Right cardiac atrium (tissue), 5 donors: ENCODE measurements at regions of chr3 and their contacts with region 1.

Region 1: DNA sequence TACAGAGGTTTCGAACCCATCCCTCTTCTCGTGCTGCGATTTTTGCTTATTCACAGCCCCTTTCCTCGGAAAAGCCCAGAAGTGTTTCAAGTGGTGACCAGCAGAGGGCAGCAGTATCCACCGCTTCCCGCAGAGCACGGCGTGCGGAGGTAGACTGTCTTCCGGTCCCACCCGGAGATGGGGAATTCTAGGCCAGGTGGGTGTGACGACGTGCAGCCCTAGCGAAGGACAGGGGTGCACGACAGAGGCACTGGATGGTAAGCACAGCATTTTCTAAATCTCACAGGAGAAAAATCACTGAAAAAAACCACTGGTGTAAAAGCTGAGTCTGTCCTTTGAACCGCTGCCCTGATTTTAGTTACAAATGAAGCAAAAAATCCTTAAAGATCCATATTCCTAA is 7.4 kb upstream of the PSMD6 start:
- DNase-seq: peak; percentile 71 to 87 (median 83)
- ATAC-seq: peak; percentile 90 to 92
- H3K4me3 ChIP-seq: peak overlapping the region; percentile 34
- H3K27ac ChIP-seq: no peak overlapping the region
- H3K4me1 ChIP-seq: no peaks in the 10 kb centered on the region
- H3K27me3 ChIP-seq: peaks cover 2% of the 10 kb centered on the region

Region 2: DNA sequence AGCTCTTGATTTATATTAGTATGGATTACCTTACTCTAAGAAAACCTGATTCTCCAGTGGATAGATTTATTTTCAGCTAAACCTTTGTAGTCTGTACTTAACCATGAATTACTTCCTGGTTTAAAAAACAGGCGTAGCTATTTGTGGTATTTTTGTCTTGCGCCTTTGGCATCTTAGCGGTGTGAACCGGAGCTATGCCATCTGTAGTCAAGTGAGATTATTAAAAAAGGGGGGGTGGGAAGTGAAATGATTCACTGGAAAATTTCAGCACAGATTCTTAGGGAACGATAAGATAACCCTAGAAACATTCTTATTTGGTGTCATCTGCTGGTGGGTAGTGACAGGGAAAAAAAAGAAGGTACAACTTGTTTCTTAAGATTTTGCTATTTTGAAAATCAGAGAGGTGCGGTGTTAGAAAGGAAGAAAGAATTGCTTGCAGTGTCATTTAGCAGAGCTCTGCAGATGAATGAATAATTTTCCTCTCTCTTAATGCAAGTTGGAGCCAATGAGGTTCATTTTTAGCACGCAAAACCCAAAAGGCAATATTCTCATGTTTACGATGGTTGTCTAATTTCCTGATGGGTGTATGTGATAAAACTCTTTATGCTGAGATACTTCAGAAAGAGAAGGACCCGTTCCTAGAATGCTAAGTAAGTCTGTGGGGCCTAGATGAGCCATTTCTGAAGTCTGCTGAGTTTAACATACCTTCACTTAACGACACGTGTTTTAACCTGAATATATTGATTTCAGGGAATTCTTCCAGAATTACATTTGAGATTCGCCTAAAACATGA is 51.5 kb before region 1 on chr3:
- intact Hi-C with region 1: no loop called
- DNase-seq: no peak
- ATAC-seq: no peak
- H3K4me3 ChIP-seq: no peak overlapping the region
- H3K27ac ChIP-seq: no peak overlapping the region
- H3K4me1 ChIP-seq: peaks cover 7% of the 10 kb centered on the region
- H3K27me3 ChIP-seq: no peaks in the 10 kb centered on the region

Region 3: DNA sequence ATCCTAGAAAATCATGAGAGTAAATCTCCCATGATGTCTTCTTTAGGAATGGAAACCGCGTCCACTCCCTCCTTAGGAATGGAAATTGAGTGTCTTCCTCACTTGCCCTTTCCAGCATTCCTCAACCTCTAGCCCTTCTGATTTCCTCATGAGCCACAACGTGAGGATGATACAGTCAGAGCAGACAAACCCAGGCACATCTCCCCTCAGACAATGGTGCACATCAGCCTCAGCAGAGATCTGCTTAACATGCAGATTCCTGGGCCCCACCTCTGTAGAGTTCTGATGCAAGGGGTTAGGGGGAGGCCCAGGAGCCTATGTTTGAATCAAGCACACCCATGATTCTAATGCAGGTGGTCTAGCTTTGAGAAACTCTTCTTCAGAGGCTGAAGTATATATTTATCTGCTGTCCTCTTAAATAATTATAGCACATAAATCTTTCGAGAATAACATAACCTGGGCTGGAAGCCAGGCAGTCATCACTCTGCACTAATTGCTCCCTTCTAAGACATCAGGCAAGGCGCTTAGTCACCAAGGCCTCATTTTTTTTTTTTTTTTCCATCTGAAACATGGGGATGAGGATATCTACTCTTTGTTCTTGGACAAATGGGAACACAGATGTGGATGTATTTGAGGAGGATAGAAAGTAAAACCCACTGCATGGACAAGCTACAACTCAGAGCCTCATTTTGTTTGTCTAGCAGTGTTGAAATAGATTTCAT is 112.8 kb after region 1 on chr3:
- intact Hi-C with region 1: loop called in 2 of 4 experiments (anchors 10 kb)
- DNase-seq: no peak
- ATAC-seq: peak in 1 of 2 donors; percentile 20
- H3K4me3 ChIP-seq: no peak overlapping the region
- H3K27ac ChIP-seq: no peak overlapping the region
- H3K4me1 ChIP-seq: peaks cover 3% of the 10 kb centered on the region
- H3K27me3 ChIP-seq: no peaks in the 10 kb centered on the region

Region 4: GRCh38 chr3:64163755-64164148 is 133.0 kb after region 1 on chr3:
- intact Hi-C with region 1: loop called in 1 of 4 experiments (anchors 10 kb)
- DNase-seq: no peak
- ATAC-seq: no peak
- H3K4me3 ChIP-seq: no peak overlapping the region
- H3K27ac ChIP-seq: no peak overlapping the region
- H3K4me1 ChIP-seq: peaks cover 3% of the 10 kb centered on the region
- H3K27me3 ChIP-seq: no peaks in the 10 kb centered on the region

Region 5: DNA sequence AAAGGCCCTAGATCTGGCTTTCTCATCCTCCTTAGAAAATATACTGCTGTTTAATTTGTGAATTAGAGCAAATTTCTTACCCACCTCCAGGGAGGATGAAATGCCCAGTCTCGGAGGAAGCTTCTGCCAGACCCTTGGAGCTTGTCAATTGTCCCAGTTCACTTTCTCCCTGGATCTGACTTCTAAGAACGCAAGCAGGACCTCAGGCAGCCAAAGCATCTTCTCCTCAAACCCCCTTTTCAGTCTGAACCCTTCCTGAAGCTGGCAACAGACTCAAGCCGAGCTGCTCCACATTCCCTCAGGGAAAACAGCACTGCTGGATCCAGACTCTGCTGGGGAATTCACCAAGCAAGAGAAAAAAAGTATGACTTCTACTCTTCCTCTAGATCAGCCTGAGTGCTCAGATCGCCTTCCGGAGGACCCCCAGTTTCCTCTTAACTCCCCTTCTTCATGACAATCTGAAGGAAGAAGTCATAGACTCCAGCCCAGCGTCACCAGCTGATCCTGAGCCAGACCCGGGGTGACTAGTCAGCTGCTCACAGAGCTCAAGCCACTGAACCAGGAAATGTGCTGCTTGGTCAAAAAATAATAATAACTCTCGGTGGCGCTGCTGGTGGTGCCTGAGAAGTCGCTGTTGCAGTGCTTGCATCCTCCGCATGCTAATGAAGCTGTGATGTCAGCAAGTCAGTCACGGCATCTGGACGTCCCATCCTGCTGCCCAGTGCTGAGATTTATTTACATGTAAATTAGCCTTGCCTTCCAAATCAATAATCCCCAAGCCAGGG is 194.3 kb after region 1 on chr3 and contains the start of gene PRICKLE2:
- intact Hi-C with region 1: loop called in 2 of 4 experiments (anchors 10 kb)
- DNase-seq: peak; percentile 85 to 90 (median 90)
- ATAC-seq: peak; percentile 74 to 90
- H3K4me3 ChIP-seq: peak within 1 kb of the TSS; percentile 23
- H3K27ac ChIP-seq: peak within 1 kb of the TSS; percentile 63
- H3K4me1 ChIP-seq: peaks cover 17% of the 10 kb centered on the region
- H3K27me3 ChIP-seq: no peaks in the 10 kb centered on the region
- total RNA-seq, gene PRICKLE2: 10.6 to 15.2 (median 11.8) TPM

Region 6: GRCh38 chr3:64399205-64399800 is 368.6 kb after region 1 on chr3:
- intact Hi-C with region 1: loop called (anchors 2 to 5 kb)
- DNase-seq: no peak
- ATAC-seq: peak; percentile 61 to 75
- H3K4me3 ChIP-seq: no peak overlapping the region
- H3K27ac ChIP-seq: no peak overlapping the region
- H3K4me1 ChIP-seq: no peaks in the 10 kb centered on the region
- H3K27me3 ChIP-seq: no peaks in the 10 kb centered on the region

Region 7: GRCh38 chr3:64484289-64484992 is 453.7 kb after region 1 on chr3:
- intact Hi-C with region 1: loop called in 3 of 4 experiments (anchors 2 to 5 kb)
- DNase-seq: peak; percentile 82 to 90 (median 89)
- ATAC-seq: peak; percentile 93 to 95
- H3K4me3 ChIP-seq: no peak overlapping the region
- H3K27ac ChIP-seq: no peak overlapping the region
- H3K4me1 ChIP-seq: no peaks in the 10 kb centered on the region
- H3K27me3 ChIP-seq: no peaks in the 10 kb centered on the region